ENCODE measurements at regions of chr16 and their contacts with region 1.

Region 1: GRCh38 chr16:81585785-81586184 is 141.2 kb downstream of the CMIP start:
- DNase-seq: peak; percentile 45
- H3K4me3 Mint-ChIP-seq: peak overlapping the region; percentile 54
- H3K27ac Mint-ChIP-seq: peak overlapping the region; percentile 94
- H3K4me1 Mint-ChIP-seq: peaks cover 79% of the 10 kb centered on the region
- H3K27me3 Mint-ChIP-seq: no peaks in the 10 kb centered on the region
- CTCF ChIP-seq: peak; percentile 29

Region 2: GRCh38 chr16:81151648-81152310 is 434.0 kb before region 1 on chr16:
- CTCF ChIA-PET with region 1: no interaction called
- intact Hi-C with region 1: no loop called
- DNase-seq: peak; percentile 36
- H3K4me3 Mint-ChIP-seq: no peak overlapping the region
- H3K27ac Mint-ChIP-seq: no peak overlapping the region
- H3K4me1 Mint-ChIP-seq: peaks cover 16% of the 10 kb centered on the region
- H3K27me3 Mint-ChIP-seq: no peaks in the 10 kb centered on the region
- CTCF ChIP-seq: no peak

Region 3: GRCh38 chr16:81444448-81445121 is 141.2 kb before region 1 on chr16 and contains the start of gene CMIP:
- CTCF ChIA-PET with region 1: no interaction called
- intact Hi-C with region 1: loop called (anchors 2 kb)
- DNase-seq: peak; percentile 92
- H3K4me3 Mint-ChIP-seq: peak within 1 kb of the TSS; percentile 100
- H3K27ac Mint-ChIP-seq: peak within 1 kb of the TSS; percentile 99
- H3K4me1 Mint-ChIP-seq: peaks cover 56% of the 10 kb centered on the region
- H3K27me3 Mint-ChIP-seq: no peaks in the 10 kb centered on the region
- CTCF ChIP-seq: no peak
- total RNA-seq, gene CMIP: 79.9 and 82.7 TPM in 2 replicates

Region 4: DNA sequence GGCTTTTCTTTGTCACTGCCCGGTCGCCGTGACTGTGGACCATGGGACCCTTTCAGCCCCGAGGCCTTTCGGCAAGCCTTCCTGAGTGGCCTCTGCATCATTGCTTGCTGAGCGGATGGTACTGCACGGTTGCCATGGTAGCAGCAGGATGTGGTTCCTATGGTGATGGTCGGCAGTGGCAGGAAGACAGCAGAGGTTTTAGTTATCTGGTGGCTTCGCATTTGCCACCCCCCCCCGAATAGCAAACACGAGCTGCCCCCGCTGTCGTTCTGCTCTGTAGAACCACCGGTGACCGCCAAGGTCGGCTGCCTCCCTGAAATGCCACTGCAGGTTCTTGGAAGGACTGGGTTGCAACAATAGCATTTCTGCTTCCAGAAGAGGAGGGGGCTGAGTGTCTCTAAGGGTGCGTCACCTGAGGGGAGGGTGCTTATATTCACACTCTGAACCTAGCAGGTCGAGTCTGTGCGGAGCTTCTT is 64.6 kb before region 1 on chr16:
- CTCF ChIA-PET with region 1: no interaction called
- intact Hi-C with region 1: loop called (anchors 10 kb)
- DNase-seq: no peak
- H3K4me3 Mint-ChIP-seq: no peak overlapping the region
- H3K27ac Mint-ChIP-seq: no peak overlapping the region
- H3K4me1 Mint-ChIP-seq: peaks cover 48% of the 10 kb centered on the region
- H3K27me3 Mint-ChIP-seq: no peaks in the 10 kb centered on the region
- CTCF ChIP-seq: no peak

Region 5: GRCh38 chr16:81632392-81633146 is 46.8 kb after region 1 on chr16:
- CTCF ChIA-PET with region 1: no interaction called
- intact Hi-C with region 1: loop called (anchors 2 kb)
- DNase-seq: peak; percentile 83
- H3K4me3 Mint-ChIP-seq: peak overlapping the region; percentile 48
- H3K27ac Mint-ChIP-seq: peak overlapping the region; percentile 82
- H3K4me1 Mint-ChIP-seq: peaks cover 42% of the 10 kb centered on the region
- H3K27me3 Mint-ChIP-seq: no peaks in the 10 kb centered on the region
- CTCF ChIP-seq: no peak